ENCODE measurements at regions of chr22 and their contacts with region 1.

Region 1: GRCh38 chr22:29994027-29994715 is 86.1 kb upstream of the HORMAD2 start:
- DNase-seq: peak; percentile 89
- ATAC-seq: peak; percentile 84
- H3K4me3 ChIP-seq: no peak overlapping the region
- H3K27ac ChIP-seq: no peak overlapping the region
- H3K4me1 ChIP-seq: peaks cover 16% of the 10 kb centered on the region
- H3K27me3 ChIP-seq: no peaks in the 10 kb centered on the region
- CTCF ChIP-seq: no peak
- POLR2A ChIP-seq: no peak
- RAD21 ChIP-seq: peak; percentile 26; the same call in 1 of the 2 replicates

Region 2: GRCh38 chr22:29744902-29745301 is 249.3 kb before region 1 on chr22:
- CTCF ChIA-PET with region 1: no interaction called
- POLR2A ChIA-PET with region 1: no interaction called
- dilution Hi-C with region 1: no loop called
- in situ Hi-C with region 1: no loop called
- intact Hi-C with region 1: no loop called
- DNase-seq: peak; percentile 70
- ATAC-seq: peak; percentile 77
- H3K4me3 ChIP-seq: no peak overlapping the region
- H3K27ac ChIP-seq: no peak overlapping the region
- H3K4me1 ChIP-seq: peaks cover 5% of the 10 kb centered on the region; the same call in 1 of the 2 replicates
- H3K27me3 ChIP-seq: no peaks in the 10 kb centered on the region
- CTCF ChIP-seq: no peak
- POLR2A ChIP-seq: no peak
- RAD21 ChIP-seq: no peak

Region 3: DNA sequence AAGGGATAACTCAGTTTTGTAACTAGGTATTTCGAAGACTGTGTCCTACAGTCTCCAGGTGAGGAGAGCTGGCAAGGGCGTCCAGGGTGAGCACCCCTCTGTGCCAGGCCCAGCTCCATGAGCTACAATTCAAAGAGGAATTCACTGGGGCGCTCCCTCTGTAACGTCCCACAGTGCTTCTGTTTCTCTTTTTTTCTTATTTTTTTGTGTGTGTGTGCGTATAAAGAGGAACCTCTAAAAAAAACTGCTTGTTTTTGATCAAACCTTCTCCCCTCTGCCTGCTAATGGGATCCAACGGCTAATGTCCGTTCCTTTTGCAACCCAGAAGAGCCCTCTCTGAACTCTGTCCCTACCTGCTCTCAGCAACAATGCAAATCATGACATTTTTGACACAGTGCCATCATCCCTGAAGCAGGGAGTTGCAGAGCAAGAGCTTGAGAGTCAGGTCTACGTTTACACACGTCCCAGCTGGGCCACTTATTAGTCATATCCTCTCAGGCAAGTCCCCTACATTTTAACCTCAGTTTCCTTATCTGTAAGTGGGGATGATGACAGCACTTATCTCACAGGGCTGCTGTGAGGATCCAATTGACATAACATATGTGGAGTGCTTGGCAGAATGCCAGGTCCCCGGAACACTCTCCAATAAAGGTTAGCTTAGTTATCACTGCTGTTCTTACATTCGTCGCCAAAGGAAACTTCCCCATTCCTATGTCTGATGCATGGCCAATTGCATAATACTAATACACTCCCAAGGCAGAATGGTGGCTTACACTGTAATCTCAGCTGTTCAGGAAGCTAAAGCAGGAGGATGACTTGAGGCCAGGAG is 173.0 kb before region 1 on chr22:
- CTCF ChIA-PET with region 1: no interaction called
- POLR2A ChIA-PET with region 1: no interaction called
- dilution Hi-C with region 1: no loop called
- in situ Hi-C with region 1: no loop called
- intact Hi-C with region 1: loop called (anchors 5 kb)
- DNase-seq: peak; percentile 98
- ATAC-seq: peak; percentile 92
- H3K4me3 ChIP-seq: no peak overlapping the region
- H3K27ac ChIP-seq: no peak overlapping the region
- H3K4me1 ChIP-seq: peaks cover 2% of the 10 kb centered on the region; the same call in 1 of the 2 replicates
- H3K27me3 ChIP-seq: no peaks in the 10 kb centered on the region
- CTCF ChIP-seq: no peak
- POLR2A ChIP-seq: no peak
- RAD21 ChIP-seq: no peak

Region 4: GRCh38 chr22:29883045-29883774 is 111.0 kb before region 1 on chr22 and contains the start of gene MTMR3:
- CTCF ChIA-PET with region 1: no interaction called
- POLR2A ChIA-PET with region 1: no interaction called
- dilution Hi-C with region 1: no loop called
- in situ Hi-C with region 1: no loop called
- intact Hi-C with region 1: loop called (anchors 5 kb)
- DNase-seq: peak; percentile 84
- ATAC-seq: peak; percentile 89
- H3K4me3 ChIP-seq: peak within 1 kb of the TSS; percentile 100
- H3K27ac ChIP-seq: peak within 1 kb of the TSS; percentile 83
- H3K4me1 ChIP-seq: peaks cover 5% of the 10 kb centered on the region
- H3K27me3 ChIP-seq: no peaks in the 10 kb centered on the region
- CTCF ChIP-seq: peak; percentile 42
- POLR2A ChIP-seq: peak; percentile 60
- RAD21 ChIP-seq: peak; percentile 25; the same call in 1 of the 2 replicates
- total RNA-seq, gene MTMR3: 26.1 and 29.4 TPM in 2 replicates